GM13977 (cell line): ENCODE measurements at regions of chr5 and their contacts with region 1.

Region 1: DNA sequence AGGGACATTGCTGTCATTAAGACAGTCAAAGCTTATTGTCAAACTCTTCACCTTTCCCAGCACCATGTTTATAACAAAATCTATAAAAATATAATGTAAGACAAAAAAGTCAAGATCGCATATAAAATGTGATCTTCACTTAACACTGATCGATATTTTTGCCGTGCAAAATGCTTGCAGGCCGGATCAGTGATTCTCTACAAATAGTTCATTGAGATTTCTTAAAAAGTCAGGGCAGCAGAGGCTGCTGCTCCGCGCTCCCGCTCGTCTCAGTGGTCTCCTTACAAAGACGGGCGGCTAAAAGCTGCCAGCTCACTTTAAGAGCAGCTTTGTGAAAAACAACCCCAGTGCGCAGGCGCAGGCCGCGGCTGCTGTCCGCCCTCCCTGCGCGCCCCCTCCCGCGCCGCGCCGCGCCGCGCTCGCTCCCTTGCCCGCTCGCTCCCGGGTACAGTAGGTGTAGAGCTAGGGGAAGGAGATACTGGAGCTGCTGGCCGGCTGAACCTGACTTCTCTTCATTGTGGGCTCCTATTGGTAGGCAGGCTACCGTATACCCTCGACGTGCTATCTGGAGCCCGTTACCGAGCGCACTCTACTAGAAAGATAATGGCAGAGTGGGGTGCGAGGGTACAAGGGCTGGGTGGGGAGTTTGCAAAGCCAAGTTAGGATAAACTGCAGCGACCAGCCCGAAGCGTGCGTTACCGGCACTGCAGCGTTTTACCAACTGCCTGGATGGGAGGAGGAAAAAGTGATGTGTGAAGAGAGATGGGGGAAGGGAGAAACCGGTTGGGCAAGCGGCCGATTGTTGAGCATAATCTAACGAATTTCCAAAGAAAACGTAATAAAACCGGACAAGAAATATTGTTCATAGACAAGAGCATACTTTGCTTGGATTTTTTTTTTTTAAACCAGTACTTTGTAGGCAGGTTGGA is at the start of gene ARRDC3:
- DNase-seq: peak; percentile 86
- CTCF ChIP-seq: no peak

Region 2: GRCh38 chr5:91101600-91102379 is 281.5 kb before region 1 on chr5:
- in situ Hi-C with region 1: loop called (anchors 10 kb)
- DNase-seq: peak; percentile 39
- CTCF ChIP-seq: peak; percentile 66

Region 3: DNA sequence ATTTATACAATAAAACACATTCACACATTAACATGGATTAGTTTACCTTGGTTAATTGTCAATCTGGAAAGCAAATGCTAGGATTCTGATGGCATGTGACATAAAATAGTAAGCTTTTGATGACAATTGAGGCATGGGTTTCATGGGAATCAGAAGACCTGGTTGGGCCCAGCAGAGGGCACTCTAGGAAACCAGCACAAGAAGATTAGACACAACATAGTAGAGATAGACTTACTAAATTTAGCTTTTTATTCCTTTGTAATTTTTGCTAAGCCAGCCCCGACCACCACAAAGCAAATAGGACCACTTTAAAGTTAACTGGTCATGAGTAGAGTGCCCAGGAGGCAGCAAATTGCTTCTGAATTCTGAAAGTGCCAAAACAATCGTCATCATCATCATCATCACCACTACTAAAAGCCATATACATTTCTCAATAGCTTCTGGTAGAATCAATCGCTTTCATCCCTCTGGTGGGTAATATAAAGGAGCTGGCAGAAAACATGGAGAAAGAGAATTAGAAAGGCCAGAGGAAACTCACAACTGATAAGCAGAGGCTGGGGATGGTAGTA is 163.4 kb before region 1 on chr5:
- in situ Hi-C with region 1: loop called (anchors 5 kb)
- DNase-seq: peak; percentile 21
- CTCF ChIP-seq: peak; percentile 45

Region 4: GRCh38 chr5:91670563-91670962 is 287.3 kb after region 1 on chr5:
- in situ Hi-C with region 1: no loop called
- DNase-seq: no peak
- CTCF ChIP-seq: no peak